Ascending aorta (tissue), 2 donors: ENCODE measurements at regions of chr11 and their contacts with region 1.

Region 1: GRCh38 chr11:34331329-34331728 is 26.5 kb downstream of the ABTB2 start:
- DNase-seq: no peak
- H3K4me3 ChIP-seq: no peak overlapping the region
- H3K27ac ChIP-seq: peak overlapping the region; percentile 47 to 65
- H3K4me1 ChIP-seq: peaks cover 14 to 44% of the 10 kb centered on the region in 2 donors
- H3K27me3 ChIP-seq: no peaks in the 10 kb centered on the region
- CTCF ChIP-seq: no peak

Region 2: DNA sequence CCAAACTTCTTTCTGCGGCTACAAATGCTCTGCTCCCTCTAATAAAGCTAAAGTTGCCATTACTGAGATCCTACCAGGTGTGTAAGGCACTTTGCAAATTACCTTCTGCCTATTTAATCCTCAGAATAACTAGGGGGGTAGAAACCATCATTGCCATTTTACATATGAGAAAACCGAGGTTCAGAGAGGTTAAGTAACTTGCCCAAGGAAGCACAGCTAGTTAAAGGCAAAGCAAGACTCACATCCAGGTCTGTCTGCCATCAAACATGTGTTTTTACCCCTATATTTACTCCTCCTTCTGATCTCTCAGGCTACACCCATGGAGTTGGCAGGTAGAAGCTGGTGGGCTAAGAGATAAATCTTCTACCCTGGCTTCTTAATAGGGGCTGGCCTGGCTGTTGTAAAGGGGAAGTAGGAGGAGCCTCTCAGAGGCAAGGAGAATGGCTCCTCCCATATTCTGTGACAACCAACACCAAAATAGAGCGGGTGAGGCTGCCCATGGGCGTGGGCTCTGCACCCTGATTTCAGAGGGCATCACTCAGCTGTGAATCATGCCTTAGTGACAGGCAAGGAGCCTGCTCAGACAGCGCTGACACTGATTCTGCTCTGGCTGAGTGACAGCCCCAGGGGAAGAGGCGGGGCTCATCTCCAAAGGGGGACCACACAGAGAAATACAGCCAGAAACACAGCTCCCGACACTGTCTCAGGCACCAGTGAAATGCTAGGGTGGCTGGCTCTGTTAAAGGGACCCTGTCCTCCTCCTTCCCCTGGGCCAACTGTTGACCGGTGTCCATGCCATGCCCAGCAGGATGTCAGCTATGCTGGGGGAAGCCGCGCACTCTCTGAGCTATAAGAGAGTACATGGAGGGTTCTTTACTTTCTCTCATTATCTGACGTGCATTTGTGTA is 80.3 kb before region 1 on chr11:
- intact Hi-C with region 1: loop called (anchors 5 kb)
- DNase-seq: peak; percentile 37 to 87
- H3K4me3 ChIP-seq: peak overlapping the region; percentile 11 to 50
- H3K27ac ChIP-seq: peak overlapping the region; percentile 78 to 86
- H3K4me1 ChIP-seq: peaks cover 3 to 11% of the 10 kb centered on the region in 2 donors
- H3K27me3 ChIP-seq: no peaks in the 10 kb centered on the region
- CTCF ChIP-seq: no peak

Region 3: GRCh38 chr11:34266090-34266912 is 65.0 kb before region 1 on chr11:
- intact Hi-C with region 1: loop called (anchors 5 kb)
- DNase-seq: peak in 1 of 2 donors; percentile 83
- H3K4me3 ChIP-seq: peak overlapping the region in 1 of 2 donors; percentile 3
- H3K27ac ChIP-seq: peak overlapping the region; percentile 61 to 67
- H3K4me1 ChIP-seq: peaks cover 3 to 37% of the 10 kb centered on the region in 2 donors
- H3K27me3 ChIP-seq: no peaks in the 10 kb centered on the region
- CTCF ChIP-seq: no peak

Region 4: GRCh38 chr11:34308913-34309585 is 22.3 kb before region 1 on chr11:
- intact Hi-C with region 1: loop called (anchors 2 kb)
- DNase-seq: no peak
- H3K4me3 ChIP-seq: no peak overlapping the region
- H3K27ac ChIP-seq: peak overlapping the region in 1 of 2 donors; percentile 41
- H3K4me1 ChIP-seq: peaks cover 3 to 10% of the 10 kb centered on the region in 2 donors
- H3K27me3 ChIP-seq: no peaks in the 10 kb centered on the region
- CTCF ChIP-seq: no peak

Region 5: GRCh38 chr11:34345991-34346480 is 14.7 kb after region 1 on chr11:
- intact Hi-C with region 1: loop called (anchors 2 kb)
- DNase-seq: peak; percentile 47 to 85
- H3K4me3 ChIP-seq: peak overlapping the region in 1 of 2 donors; percentile 27
- H3K27ac ChIP-seq: peak overlapping the region; percentile 78 to 94
- H3K4me1 ChIP-seq: peaks cover 15 to 76% of the 10 kb centered on the region in 2 donors
- H3K27me3 ChIP-seq: no peaks in the 10 kb centered on the region
- CTCF ChIP-seq: no peak